ENCODE measurements at regions of chr16 and their contacts with region 1.

Region 1: DNA sequence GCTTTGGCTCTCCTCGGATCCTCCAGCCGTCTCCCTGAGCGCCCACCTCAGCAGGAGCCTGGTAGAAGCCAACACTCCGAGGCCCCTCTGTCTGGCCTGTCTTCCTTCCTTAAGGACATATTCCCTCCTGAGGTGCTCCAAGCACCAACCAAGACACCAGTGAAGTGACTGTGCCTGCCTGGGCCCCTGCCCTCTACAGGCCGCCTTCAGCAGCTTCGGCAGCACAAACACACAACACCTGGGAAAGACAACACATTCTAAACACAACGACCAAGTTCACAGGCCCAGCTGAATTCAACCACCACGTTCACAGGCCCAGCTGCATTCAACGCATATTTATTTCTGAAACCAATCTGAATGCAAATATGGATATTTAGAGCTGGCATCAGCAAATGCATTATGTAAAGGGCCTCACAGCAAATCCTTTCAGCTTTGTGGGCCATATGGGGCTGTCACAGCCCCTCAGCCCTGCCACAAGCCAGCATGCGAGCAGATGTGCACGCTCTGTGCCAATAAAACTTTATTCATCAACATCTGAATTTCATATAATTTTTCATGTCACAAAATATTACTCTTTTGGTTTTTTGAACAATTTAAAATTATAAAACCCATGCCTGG is 12.2 kb downstream of the GALNS start:
- DNase-seq: no peak
- H3K4me3 ChIP-seq: no peak overlapping the region
- H3K27ac ChIP-seq: peak overlapping the region; percentile 35 to 48
- H3K4me1 ChIP-seq: no peaks in the 10 kb centered on the region
- H3K27me3 ChIP-seq: no peaks in the 10 kb centered on the region
- CTCF ChIP-seq: no peak
- POLR2A ChIP-seq: no peak

Region 2: GRCh38 chr16:88856828-88857733 is 12.6 kb after region 1 on chr16 and contains the starts of genes GALNS and TRAPPC2L:
- intact Hi-C with region 1: loop called (anchors 1 kb)
- DNase-seq: peak; percentile 98 to 100
- H3K4me3 ChIP-seq: peak within 1 kb of the TSS; percentile 68 to 97 (median 75)
- H3K27ac ChIP-seq: peak within 1 kb of the TSS; percentile 79 to 91
- H3K4me1 ChIP-seq: peaks cover 0 to 7% of the 10 kb centered on the region in 2 donors
- H3K27me3 ChIP-seq: no peaks in the 10 kb centered on the region
- CTCF ChIP-seq: no peak
- POLR2A ChIP-seq: peak; percentile 46
- total RNA-seq, gene GALNS: 16.2 to 29.5 (median 17.9) TPM
- total RNA-seq, gene TRAPPC2L: 32.1 to 37.8 (median 34.4) TPM

Region 3: DNA sequence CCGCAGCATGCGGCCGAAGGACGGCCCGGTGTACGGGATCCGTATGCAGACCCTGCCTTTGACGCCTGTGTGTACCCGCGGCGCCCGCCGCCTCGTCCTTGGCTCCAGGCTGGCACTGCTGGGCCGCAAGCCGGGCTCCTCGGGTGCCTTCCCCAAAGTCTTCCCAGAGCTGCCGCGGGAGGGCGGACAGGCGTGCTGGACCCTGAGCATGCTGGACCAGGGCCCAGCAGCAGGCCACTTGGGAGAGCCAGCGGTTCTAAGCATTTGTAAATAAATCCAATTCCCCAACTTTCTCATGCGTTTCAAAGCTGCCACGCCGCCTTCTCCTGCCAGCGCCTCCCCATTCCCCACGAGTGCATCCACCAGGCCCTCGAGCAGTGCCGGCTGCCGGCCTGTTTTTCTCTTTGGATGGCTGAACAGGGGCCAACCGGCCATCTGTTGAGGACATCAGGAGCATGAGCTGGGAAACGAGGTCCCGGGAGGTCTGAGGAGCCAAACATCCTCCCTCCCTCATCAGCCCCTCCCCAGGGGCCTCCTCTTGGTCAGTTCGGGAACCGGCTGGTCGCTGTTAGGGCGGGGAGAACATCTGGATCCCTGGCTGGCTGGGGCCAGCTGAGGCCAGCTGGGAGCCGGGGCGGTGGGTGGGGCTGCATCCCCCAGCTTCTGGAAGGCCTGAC is 42.5 kb after region 1 on chr16:
- intact Hi-C with region 1: loop called (anchors 1 kb)
- DNase-seq: no peak
- H3K4me3 ChIP-seq: peak overlapping the region in 1 of 3 donors; percentile 8
- H3K27ac ChIP-seq: peak overlapping the region in 1 of 2 donors; percentile 84
- H3K4me1 ChIP-seq: no peaks in the 10 kb centered on the region
- H3K27me3 ChIP-seq: no peaks in the 10 kb centered on the region
- CTCF ChIP-seq: no peak
- POLR2A ChIP-seq: no peak